Activated naive CD4-positive, alpha-beta T cell treated with anti-CD3 and anti-CD28 coated beads for 36 hours (primary cell): ENCODE measurements at regions of chr12 and their contacts with region 1.

Region 1: DNA sequence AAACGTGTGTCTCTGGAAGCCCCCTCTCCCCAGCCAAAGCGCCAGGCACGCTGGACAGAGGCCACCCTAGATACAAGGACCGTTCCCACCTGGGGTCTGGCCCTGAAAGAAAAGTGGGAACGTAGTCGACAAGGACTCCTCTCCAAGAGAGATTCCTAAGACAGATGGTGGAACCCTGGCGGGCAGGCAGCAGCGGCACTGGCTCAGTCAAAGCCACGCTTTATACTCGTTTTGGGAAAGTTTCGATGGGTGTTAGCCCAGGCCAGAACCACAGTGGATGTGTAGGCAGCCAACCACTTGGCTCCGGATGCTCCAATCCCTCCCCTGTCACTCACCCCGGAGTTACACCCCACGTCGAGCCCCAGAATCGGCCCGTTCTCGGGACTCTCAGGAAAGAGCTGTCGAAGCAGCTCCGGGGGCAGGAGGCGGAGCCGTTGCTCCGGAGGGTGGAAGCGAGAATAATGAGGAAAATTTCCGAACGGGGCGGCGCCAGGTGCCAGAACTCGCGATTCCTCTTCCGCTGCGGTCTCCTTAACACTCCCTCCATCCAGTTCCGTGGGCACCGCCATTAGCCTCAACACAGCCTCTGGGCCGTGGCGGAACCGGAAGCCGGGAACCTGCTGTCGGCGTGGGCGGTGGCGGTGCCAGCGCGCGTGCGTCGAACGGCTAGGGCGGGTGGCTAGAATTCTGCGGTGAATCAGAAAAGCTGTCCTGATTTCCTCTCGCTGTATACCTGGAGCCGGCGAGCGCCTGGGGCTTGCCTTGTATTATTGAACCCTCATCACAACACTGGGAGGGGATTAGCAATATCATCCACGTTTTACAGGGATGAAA is at the start of gene BCDIN3D:
- DNase-seq: peak; percentile 97
- H3K4me3 Mint-ChIP-seq: peak within 1 kb of the TSS; percentile 91
- H3K27ac Mint-ChIP-seq: peak within 1 kb of the TSS; percentile 93
- H3K4me1 Mint-ChIP-seq: peaks cover 34% of the 10 kb centered on the region
- H3K27me3 Mint-ChIP-seq: no peaks in the 10 kb centered on the region
- total RNA-seq, gene BCDIN3D: 2.4 to 4.1 TPM

Region 2: GRCh38 chr12:49644620-49644994 is 198.1 kb before region 1 on chr12:
- CTCF ChIA-PET with region 1: no interaction called
- intact Hi-C with region 1: loop called (anchors 2 kb)
- DNase-seq: peak; percentile 90
- H3K4me3 Mint-ChIP-seq: no peak overlapping the region
- H3K27ac Mint-ChIP-seq: peak overlapping the region; percentile 71
- H3K4me1 Mint-ChIP-seq: peaks cover 29% of the 10 kb centered on the region
- H3K27me3 Mint-ChIP-seq: no peaks in the 10 kb centered on the region

Region 3: DNA sequence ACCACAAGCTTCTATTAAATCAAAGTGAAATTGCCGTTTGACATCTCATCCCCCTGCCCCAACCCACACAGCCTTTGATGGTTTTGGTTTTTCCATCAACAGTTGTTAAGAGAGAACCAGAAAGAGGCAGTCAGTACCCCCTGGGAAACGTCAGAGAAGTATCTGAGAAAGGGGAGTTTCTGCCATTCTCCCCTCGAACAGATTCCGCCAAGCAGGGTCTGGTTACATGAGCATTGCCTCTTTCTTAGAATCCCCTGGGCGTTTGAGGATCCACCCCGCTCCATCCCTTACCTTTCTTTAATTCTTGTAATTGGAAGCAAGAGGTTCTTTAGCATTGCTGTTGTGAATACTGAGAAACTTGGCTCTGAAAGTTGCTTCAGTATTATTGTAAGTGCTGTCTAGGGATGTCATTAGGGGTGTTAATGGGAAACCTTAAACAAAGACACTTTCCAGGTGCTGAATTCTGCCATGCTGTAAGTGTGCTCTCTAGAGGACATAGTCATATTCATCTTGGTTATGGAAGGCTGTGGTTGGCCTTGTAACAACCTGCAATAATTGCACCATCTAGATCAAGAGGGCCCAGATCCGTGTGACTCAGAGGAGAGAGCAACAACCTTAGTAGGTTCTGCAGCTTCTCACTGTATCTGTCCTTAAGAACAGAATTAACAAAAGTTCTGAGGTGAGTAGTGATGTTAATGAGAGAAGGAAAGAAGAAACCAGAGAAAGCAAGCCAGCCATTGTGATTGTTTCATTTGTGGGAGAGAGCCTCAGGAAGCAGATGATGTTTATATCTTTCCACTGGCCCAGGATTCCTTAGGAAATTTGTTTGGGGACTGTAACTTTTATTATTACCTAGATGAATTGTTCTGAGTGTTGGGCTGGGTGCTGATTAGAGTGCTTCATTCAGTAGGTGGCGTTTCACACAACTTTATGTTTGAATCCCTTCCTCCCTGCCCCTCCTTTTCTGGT is 92.4 kb before region 1 on chr12:
- CTCF ChIA-PET with region 1: no interaction called
- intact Hi-C with region 1: loop called (anchors 1 kb)
- DNase-seq: peak; percentile 87
- H3K4me3 Mint-ChIP-seq: peak overlapping the region; percentile 40
- H3K27ac Mint-ChIP-seq: peak overlapping the region; percentile 94
- H3K4me1 Mint-ChIP-seq: peaks cover 83% of the 10 kb centered on the region
- H3K27me3 Mint-ChIP-seq: no peaks in the 10 kb centered on the region

Region 4: DNA sequence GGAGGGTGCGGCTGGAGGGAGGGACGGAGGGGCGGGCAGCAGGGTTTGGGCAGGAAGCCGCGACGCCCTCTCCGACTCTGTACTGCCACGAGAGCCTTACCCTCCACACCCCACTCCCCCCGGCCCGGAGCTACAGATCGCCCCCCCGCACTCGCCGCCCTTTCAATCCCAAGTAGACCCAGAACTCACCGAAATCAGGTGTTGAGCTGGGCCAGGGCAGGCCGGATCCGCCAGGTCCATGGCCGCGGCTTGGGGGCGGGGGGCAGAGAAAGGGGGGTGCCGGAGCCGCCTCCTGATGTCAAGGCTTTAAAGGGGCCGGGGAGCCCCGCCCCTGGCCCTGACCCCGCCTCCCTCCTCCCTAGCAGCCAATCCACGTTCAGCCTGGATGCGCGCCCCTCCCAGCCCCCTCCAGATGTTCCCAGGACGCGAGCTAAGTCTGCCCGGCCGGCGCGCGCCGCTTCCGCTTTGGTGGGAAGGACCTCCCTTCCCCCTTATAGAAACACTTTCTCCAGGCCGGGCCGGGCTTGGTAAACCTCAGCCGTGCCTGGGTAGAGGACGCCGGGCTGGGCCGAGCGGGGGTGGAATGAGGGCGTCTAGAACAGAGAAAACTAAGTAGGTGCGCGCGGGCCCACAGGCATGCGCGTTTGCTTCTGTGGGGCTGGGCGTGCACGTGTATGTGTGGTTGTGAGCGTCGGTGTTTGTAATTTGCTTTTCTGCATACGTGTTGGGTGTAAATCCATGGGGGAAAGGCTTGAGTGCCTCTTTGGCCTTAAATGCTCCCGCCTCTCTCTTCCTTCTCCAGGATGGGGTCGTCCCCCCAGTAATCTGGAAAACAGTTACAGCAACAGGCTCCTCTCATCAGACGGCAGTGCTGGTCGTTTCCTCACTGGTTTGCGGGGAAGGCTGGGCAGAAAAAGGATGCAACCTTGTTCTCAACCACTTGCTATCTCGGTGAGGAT is 14.3 kb before region 1 on chr12 and contains the start of gene NCKAP5L:
- CTCF ChIA-PET with region 1: interaction called, 32 read pairs
- intact Hi-C with region 1: loop called (anchors 1 kb)
- DNase-seq: peak; percentile 94
- H3K4me3 Mint-ChIP-seq: peak within 1 kb of the TSS; percentile 92
- H3K27ac Mint-ChIP-seq: peak within 1 kb of the TSS; percentile 86
- H3K4me1 Mint-ChIP-seq: peaks cover 27% of the 10 kb centered on the region
- H3K27me3 Mint-ChIP-seq: no peaks in the 10 kb centered on the region
- total RNA-seq, gene NCKAP5L: 2.8 TPM

Region 5: GRCh38 chr12:50025187-50026059 is 182.7 kb after region 1 on chr12 and contains the start of gene RACGAP1:
- CTCF ChIA-PET with region 1: no interaction called
- intact Hi-C with region 1: loop called (anchors 2 kb)
- DNase-seq: peak; percentile 98
- H3K4me3 Mint-ChIP-seq: peak within 1 kb of the TSS; percentile 92
- H3K27ac Mint-ChIP-seq: peak within 1 kb of the TSS; percentile 94
- H3K4me1 Mint-ChIP-seq: peaks cover 12% of the 10 kb centered on the region
- H3K27me3 Mint-ChIP-seq: no peaks in the 10 kb centered on the region
- total RNA-seq, gene RACGAP1: 156 to 159 TPM

Region 6: DNA sequence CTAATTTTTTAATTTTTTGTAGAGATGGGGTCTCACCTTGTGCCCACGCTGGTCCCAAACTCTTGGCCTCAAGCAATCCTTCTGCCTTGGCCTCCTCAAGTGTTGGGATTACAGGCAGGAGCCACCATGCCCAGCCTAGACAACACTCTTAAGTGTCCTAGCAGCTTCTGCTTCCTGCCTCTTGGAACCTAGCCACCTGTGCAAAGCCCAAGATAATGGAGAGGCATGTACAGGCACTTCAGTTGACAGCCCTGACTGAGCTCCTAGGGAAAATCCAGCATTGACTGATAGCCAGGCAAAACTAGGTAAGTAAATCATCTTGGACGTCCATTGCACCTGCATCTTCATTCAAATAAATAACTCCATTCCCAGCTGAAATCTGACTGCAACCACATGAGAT is 284.8 kb after region 1 on chr12:
- CTCF ChIA-PET with region 1: no interaction called
- intact Hi-C with region 1: no loop called
- DNase-seq: no peak
- H3K4me3 Mint-ChIP-seq: no peak overlapping the region
- H3K27ac Mint-ChIP-seq: peak overlapping the region; percentile 26
- H3K4me1 Mint-ChIP-seq: peaks cover 18% of the 10 kb centered on the region
- H3K27me3 Mint-ChIP-seq: no peaks in the 10 kb centered on the region